ENCODE measurements at regions of chr17 and their contacts with region 1.

Region 1: DNA sequence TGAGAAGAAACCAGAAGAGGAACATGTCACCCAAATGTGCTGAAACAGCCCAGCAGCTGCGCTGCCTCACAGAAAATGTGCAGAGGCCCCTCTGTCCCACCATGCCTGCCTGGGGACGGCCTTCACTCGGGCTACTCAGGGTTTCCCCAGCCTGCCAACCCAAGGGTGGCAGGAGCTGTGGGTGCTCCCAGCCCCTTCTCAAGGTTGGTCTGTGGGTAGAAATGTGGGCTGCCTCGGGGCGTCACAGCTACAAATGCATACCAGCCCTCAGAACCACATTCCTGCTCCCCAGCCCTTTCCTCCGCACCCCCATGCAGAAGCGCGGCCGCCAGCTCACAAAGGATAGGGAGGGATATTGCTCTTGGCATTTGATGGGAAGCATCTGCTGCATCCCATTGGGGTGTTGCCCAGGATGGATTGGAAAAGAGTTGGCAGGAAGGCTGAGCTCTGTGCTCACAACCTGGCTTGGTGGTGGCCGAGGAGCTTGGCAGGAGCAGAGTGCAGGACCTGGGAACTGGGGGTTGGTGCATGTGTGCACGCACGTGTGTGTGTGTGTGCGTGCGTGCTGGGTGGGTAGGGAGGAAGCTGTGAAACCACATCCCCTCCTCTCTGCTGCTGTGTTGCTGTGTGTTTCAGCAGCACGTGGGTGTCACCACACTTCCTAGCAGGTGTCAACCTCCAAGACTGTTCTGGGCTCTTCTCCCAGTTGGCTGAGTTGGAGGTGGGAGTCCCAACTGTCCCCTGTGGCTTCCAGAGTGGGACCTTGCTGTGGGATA is 304.4 kb downstream of the SEC14L1 start:
- DNase-seq: peak; percentile 90
- ATAC-seq: peak; percentile 52
- H3K4me3 Mint-ChIP-seq: peak overlapping the region; percentile 62
- H3K27ac Mint-ChIP-seq: peak overlapping the region; percentile 95
- H3K4me1 Mint-ChIP-seq: peaks cover 97% of the 10 kb centered on the region
- H3K27me3 Mint-ChIP-seq: no peaks in the 10 kb centered on the region

Region 2: DNA sequence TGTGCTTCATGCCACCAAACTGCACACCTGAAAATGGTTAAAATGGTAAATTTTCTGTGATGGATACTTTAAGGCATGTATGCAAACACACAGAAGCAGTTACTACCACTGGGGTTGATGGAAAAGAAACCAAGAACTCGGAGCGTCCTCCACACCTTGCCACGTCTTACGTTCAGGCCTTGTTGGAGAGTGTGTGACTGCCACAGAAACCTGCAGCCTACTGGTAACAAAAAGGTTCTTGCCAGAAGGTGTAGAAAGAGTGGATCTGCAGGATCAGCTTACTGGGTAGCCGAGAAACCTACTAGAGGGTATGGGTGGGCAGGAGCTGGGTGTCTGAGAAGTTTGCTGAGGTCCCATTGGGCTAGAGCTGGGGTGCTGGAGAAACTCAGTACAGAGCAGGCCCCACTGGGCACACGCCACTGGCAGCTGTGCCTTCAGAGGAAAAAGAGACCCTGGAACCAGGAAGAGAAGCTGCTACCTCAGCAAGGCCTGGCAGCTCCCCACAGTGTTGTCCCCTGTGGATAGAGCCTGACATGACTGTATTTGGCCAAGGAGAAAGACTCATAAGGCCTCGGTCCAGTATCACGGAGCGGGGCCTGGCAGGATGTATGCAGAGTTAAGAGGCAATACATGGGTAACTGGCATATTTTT is 99.8 kb before region 1 on chr17:
- CTCF ChIA-PET with region 1: interaction called, 6 read pairs
- POLR2A ChIA-PET with region 1: no interaction called
- intact Hi-C with region 1: loop called in 1 of 2 experiments (anchors 5 kb)
- DNase-seq: no peak
- ATAC-seq: no peak
- H3K4me3 Mint-ChIP-seq: no peak overlapping the region
- H3K27ac Mint-ChIP-seq: no peak overlapping the region
- H3K4me1 Mint-ChIP-seq: peaks cover 51% of the 10 kb centered on the region
- H3K27me3 Mint-ChIP-seq: no peaks in the 10 kb centered on the region

Region 3: GRCh38 chr17:77404812-77405581 is 40.2 kb before region 1 on chr17:
- CTCF ChIA-PET with region 1: interaction called, 15 read pairs
- POLR2A ChIA-PET with region 1: interaction called, 4 read pairs
- intact Hi-C with region 1: loop called in 1 of 2 experiments (anchors 2 kb)
- DNase-seq: peak; percentile 93
- ATAC-seq: peak; percentile 79
- H3K4me3 Mint-ChIP-seq: peak overlapping the region; percentile 95
- H3K27ac Mint-ChIP-seq: peak overlapping the region; percentile 89
- H3K4me1 Mint-ChIP-seq: peaks cover 95% of the 10 kb centered on the region
- H3K27me3 Mint-ChIP-seq: no peaks in the 10 kb centered on the region

Region 4: DNA sequence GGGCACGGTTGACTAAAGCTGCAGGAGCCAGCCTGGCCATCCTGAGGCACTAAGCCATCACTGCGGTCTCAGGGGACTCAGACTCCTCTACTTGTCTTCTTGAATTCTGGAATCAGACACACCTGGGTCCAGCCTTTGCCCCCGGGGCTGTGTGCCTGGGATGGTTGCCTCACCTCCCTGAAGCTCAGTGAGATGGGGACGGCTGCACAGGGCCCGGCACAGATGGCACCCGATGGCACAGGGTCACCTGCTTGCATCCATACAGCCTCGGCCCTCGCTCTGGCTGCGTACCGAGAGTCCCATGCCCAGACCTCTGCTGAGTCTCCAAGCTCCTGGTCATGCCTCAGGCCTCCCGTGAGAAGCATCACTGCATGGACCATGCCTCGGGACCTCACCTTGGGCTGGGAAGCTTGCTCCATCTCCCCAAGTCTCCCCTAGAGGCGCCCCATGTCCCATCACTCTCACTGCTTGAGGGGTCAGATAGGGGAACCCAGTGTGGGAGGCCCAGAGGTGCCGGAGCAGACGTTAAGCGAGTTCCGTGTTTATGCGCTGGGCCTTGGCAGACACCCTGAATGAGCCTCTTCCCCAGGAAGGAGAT is 11.9 kb after region 1 on chr17:
- CTCF ChIA-PET with region 1: interaction called, 10 read pairs
- POLR2A ChIA-PET with region 1: interaction called, 13 read pairs
- intact Hi-C with region 1: loop called (anchors 1 kb)
- DNase-seq: peak; percentile 68
- ATAC-seq: no peak
- H3K4me3 Mint-ChIP-seq: peak overlapping the region; percentile 96
- H3K27ac Mint-ChIP-seq: peak overlapping the region; percentile 98
- H3K4me1 Mint-ChIP-seq: peaks cover 47% of the 10 kb centered on the region
- H3K27me3 Mint-ChIP-seq: no peaks in the 10 kb centered on the region

Region 5: DNA sequence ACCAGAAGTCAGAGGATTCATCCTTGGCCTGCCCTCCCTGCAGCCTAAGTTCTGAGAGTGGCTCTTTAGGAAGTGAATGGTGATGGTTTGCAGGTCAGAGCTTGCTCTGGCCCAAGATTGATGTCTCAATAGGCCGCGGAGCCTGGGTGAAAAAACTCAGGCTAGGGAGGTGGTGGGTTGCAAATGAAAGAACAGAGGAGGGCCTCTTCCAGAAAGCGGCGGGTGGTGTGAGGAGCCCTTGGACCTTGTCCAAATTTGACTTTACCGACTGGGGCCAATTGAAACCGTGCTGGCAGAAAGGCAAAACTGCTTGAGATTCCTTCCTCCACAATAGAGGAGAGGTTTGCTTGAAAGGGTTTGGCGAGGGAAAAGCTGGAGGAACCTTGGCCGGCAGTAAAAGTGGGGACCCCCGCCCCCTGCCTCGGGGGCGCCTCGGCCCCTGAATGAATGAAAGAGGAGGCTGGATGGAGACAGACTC is 26.9 kb after region 1 on chr17:
- CTCF ChIA-PET with region 1: interaction called, 10 read pairs
- POLR2A ChIA-PET with region 1: interaction called, 12 read pairs
- intact Hi-C with region 1: loop called (anchors 1 kb)
- DNase-seq: no peak
- ATAC-seq: no peak
- H3K4me3 Mint-ChIP-seq: peak overlapping the region; percentile 70
- H3K27ac Mint-ChIP-seq: peak overlapping the region; percentile 86
- H3K4me1 Mint-ChIP-seq: peaks cover 96% of the 10 kb centered on the region
- H3K27me3 Mint-ChIP-seq: no peaks in the 10 kb centered on the region

Region 6: DNA sequence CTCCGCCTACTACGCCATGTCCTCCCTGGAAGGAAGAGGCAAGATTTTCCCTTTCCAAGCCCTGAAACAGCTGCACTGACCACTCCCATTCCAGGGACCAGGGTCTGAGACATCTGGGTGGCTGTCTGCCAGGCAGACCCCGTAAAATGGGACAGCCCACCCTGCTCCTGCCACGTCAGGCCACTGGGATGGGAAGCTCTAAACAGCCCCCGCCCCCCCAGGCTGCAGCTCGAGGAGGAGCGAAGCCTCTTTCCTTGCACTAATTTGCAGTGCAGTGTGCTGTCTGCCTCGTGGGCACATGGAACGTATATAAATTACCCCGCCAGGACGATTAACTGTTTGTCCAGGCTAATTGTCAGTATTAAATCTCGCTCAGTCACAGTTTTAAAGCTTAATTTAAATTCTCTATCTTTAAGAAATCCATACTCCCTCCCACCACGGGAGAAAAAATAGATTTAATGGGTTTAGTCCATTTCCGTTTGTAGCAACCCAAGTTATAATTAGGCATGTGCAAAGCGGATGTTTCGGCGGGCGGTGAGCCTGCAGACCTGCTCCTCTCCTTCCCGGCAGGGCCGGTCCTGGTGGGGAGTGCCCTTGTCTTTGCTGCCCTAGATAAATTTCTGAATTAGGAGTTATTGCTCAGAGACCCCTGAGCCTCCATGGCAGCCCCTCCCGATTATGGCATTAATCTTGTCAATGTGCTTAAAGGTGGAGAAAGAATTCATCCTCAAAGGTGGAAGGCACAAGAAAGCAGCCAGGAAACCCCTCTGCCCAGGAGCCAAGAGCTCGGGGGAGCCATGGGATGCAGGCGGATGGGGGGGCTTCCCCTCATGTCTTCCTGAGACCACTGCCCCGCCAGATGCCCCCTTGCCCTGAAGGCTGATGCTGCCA is 245.3 kb after region 1 on chr17:
- CTCF ChIA-PET with region 1: no interaction called
- POLR2A ChIA-PET with region 1: no interaction called
- intact Hi-C with region 1: no loop called
- DNase-seq: peak; percentile 28
- ATAC-seq: no peak
- H3K4me3 Mint-ChIP-seq: no peak overlapping the region
- H3K27ac Mint-ChIP-seq: no peak overlapping the region
- H3K4me1 Mint-ChIP-seq: peaks cover 25% of the 10 kb centered on the region
- H3K27me3 Mint-ChIP-seq: no peaks in the 10 kb centered on the region

Region 7: DNA sequence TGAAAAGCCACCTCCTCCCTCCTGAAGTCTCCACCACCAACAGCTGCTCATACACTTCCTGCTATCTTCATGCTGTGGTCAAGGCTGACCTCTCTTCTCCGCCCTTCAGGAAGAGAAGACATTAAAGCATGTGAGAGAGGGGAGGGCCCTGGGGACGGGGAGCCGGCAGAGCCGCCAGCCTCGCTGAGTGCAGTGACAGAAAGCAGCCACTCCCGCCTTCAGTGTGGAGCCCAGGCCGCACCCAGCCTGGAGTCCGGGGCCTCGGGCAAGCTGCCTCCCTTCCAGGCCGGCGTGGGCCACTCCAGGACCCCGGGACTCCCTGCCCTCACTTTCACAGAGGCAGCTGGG is 418.6 kb after region 1 on chr17:
- CTCF ChIA-PET with region 1: no interaction called
- POLR2A ChIA-PET with region 1: no interaction called
- intact Hi-C with region 1: no loop called
- DNase-seq: no peak
- ATAC-seq: no peak
- H3K4me3 Mint-ChIP-seq: no peak overlapping the region
- H3K27ac Mint-ChIP-seq: no peak overlapping the region
- H3K4me1 Mint-ChIP-seq: no peaks in the 10 kb centered on the region
- H3K27me3 Mint-ChIP-seq: no peaks in the 10 kb centered on the region

Region 8: DNA sequence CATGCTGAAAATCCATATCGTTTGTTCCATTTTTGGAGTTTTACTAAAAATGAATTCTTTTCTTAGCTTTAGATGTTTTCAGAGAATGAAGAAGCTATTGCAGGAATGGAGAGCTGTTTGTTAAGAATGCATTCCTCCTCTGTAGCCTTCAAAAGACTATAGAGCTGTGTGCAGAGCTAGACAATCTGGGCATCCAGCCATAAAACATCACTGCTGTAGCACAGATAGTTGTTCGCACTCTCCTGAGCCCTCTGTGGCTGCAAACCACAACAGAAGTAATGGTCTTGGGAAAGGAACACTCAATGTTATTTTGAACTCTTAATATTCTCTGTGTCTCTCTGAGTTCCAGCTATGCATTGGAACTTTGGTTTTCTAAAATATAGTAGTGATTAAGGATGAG is 518.3 kb after region 1 on chr17:
- CTCF ChIA-PET with region 1: no interaction called
- POLR2A ChIA-PET with region 1: no interaction called
- intact Hi-C with region 1: no loop called
- DNase-seq: peak; percentile 52
- ATAC-seq: no peak
- H3K4me3 Mint-ChIP-seq: peak overlapping the region; percentile 22
- H3K27ac Mint-ChIP-seq: no peak overlapping the region
- H3K4me1 Mint-ChIP-seq: peaks cover 69% of the 10 kb centered on the region
- H3K27me3 Mint-ChIP-seq: no peaks in the 10 kb centered on the region